ENCODE measurements at regions of chr3 and their contacts with region 1.

Region 1: DNA sequence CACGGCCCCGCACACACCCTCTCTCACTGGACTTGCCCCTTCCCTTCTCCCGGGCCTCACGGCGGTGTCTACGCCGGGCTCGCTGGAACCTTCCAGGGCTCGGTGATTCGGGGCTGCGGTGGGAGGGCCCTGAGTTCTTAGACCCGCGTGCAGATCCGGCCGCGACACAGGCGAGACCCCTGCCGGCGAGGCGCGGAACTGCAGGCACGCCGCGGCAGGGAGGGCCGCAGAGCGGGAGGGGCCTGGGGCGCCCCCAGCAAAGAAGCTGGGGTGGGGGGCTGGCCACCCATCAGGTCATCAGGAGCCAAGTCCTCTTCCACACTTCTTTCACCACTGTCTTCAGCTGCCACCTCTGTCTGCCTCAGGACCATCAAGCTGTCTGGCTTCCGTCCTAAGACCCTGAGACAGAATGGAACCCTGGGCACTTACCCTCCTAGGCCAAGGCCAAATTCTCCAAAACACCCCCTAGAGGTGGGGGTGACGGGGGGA is 164.5 kb downstream of the XXYLT1 start:
- DNase-seq: peak; percentile 25
- H3K4me3 ChIP-seq: peak overlapping the region in 1 of 3 experiments; percentile 45
- H3K27ac ChIP-seq: no peak overlapping the region
- H3K4me1 ChIP-seq: peaks cover 5% of the 10 kb centered on the region
- H3K27me3 ChIP-seq: no peaks in the 10 kb centered on the region
- CTCF ChIP-seq: peak; percentile 80 to 99

Region 2: GRCh38 chr3:194671900-194672808 is 434.3 kb before region 1 on chr3 and contains the start of gene LSG1:
- CTCF ChIA-PET with region 1: no interaction called
- dilution Hi-C with region 1: no loop called
- in situ Hi-C with region 1: no loop called
- intact Hi-C with region 1: loop called (anchors 1 kb)
- DNase-seq: peak; percentile 90
- H3K4me3 ChIP-seq: peak within 1 kb of the TSS; percentile 57 to 96 (median 95)
- H3K27ac ChIP-seq: peak within 1 kb of the TSS; percentile 98
- H3K4me1 ChIP-seq: peaks cover 21% of the 10 kb centered on the region
- H3K27me3 ChIP-seq: no peaks in the 10 kb centered on the region
- CTCF ChIP-seq: no peak
- total RNA-seq, gene LSG1: 33.5 to 33.8 TPM

Region 3: GRCh38 chr3:194769020-194769643 is 337.3 kb before region 1 on chr3:
- CTCF ChIA-PET with region 1: no interaction called
- dilution Hi-C with region 1: no loop called
- in situ Hi-C with region 1: no loop called
- intact Hi-C with region 1: loop called (anchors 10 kb)
- DNase-seq: peak; percentile 93
- H3K4me3 ChIP-seq: peak overlapping the region; percentile 17 to 39 (median 32)
- H3K27ac ChIP-seq: no peak overlapping the region
- H3K4me1 ChIP-seq: peaks cover 19% of the 10 kb centered on the region
- H3K27me3 ChIP-seq: no peaks in the 10 kb centered on the region
- CTCF ChIP-seq: no peak

Region 4: DNA sequence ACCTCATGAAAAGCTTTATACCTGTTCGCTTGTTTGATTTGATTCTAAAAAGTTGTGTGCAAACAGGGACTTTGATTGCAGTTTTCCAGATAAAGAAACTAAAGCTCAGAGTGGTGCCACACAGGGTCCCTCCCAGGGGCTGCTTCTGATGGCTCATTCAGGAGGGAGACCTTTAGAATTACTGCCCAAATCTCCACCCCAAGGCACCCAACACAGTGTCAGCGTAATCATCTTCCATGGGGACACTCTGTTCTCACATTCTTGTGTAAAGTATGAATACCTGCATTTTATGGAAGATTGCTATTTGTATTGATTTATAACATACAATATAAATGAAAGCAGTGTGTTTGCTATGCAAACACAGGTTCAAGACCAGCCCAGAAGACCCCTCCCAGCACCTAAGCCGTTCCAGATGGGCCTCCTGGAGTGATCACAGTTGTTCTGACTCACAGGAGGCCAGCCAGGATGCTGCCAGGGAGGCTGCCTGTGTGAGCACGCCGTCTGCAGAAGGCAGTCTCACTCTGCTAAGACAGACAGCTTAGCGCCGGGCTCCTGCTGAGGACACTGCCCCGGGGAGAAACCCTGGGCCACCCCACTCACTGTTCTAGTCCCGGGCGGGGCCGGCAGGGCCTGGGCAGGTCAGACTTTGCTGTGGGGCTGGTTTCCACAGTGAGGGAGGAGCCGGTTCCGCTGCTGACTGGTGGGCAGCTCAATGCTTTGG is 235.2 kb before region 1 on chr3:
- CTCF ChIA-PET with region 1: no interaction called
- dilution Hi-C with region 1: no loop called
- in situ Hi-C with region 1: no loop called
- intact Hi-C with region 1: loop called (anchors 10 kb)
- DNase-seq: peak; percentile 88
- H3K4me3 ChIP-seq: no peak overlapping the region
- H3K27ac ChIP-seq: peak overlapping the region; percentile 69
- H3K4me1 ChIP-seq: peaks cover 38% of the 10 kb centered on the region
- H3K27me3 ChIP-seq: no peaks in the 10 kb centered on the region
- CTCF ChIP-seq: peak in 1 of 2 donors; percentile 23

Region 5: DNA sequence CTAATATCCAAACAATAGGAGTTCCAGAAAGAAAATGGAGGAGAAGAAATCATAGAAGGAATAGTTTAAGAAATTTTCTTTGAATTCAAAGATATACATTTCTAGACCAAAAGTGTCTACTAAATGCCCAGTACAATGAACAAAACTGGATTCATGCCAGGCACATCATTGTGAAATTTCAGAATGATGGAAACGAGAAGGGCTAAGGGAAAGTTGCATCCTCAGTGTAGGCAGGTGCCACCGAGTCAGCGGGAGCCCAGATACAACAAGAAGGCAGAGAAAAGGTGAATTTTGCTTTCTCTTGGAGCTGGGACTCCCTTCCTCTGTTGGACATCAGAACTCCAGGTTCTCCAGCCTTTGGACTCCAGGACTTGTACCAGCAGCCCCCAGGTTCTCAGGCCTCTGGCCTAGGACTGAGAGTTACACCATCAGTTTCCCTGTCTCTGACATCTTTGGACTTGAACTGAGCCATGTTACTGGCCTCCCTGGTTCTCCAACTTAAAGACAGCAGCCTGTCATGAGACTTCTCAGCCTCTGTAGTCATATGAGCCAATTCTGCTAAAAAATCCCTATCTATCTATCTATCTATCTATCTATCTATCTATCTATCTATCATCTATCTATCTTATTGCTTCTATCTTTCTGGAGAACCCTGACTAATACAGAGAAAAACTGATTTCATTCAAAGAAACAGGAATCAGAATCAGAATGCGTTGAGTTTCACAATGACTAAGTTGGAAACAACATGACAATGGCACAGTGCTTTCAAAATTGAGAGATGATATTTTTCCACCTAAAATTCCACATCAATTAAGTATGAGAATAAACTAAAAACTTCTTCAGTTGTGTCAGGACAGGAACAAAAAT is 213.1 kb before region 1 on chr3:
- CTCF ChIA-PET with region 1: no interaction called
- dilution Hi-C with region 1: no loop called
- in situ Hi-C with region 1: no loop called
- intact Hi-C with region 1: no loop called
- DNase-seq: no peak
- H3K4me3 ChIP-seq: no peak overlapping the region
- H3K27ac ChIP-seq: no peak overlapping the region
- H3K4me1 ChIP-seq: no peaks in the 10 kb centered on the region
- H3K27me3 ChIP-seq: peaks cover 2% of the 10 kb centered on the region
- CTCF ChIP-seq: no peak

Region 6: DNA sequence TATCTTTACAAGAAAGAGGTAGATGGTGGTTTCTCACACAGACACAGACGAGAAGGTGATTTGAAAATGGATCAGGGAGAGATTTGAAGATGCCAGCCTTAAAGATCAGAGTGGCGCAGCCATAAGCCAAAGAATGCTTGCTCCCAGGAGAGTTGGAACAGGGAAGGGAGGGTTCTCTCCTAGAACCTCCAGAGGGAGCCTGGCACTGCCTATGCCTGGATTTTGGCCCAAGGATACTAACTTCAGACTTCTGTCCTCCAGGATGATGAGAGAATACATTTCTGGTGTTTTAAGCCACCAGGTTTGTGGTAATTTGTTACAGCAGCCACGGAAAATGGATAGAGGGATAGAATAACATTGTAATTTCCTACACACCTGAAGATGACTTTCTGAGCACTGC is 141.6 kb before region 1 on chr3:
- CTCF ChIA-PET with region 1: no interaction called
- dilution Hi-C with region 1: no loop called
- in situ Hi-C with region 1: no loop called
- intact Hi-C with region 1: loop called (anchors 1 kb)
- DNase-seq: no peak
- H3K4me3 ChIP-seq: no peak overlapping the region
- H3K27ac ChIP-seq: no peak overlapping the region
- H3K4me1 ChIP-seq: no peaks in the 10 kb centered on the region
- H3K27me3 ChIP-seq: no peaks in the 10 kb centered on the region
- CTCF ChIP-seq: peak; percentile 11 to 45

Region 7: DNA sequence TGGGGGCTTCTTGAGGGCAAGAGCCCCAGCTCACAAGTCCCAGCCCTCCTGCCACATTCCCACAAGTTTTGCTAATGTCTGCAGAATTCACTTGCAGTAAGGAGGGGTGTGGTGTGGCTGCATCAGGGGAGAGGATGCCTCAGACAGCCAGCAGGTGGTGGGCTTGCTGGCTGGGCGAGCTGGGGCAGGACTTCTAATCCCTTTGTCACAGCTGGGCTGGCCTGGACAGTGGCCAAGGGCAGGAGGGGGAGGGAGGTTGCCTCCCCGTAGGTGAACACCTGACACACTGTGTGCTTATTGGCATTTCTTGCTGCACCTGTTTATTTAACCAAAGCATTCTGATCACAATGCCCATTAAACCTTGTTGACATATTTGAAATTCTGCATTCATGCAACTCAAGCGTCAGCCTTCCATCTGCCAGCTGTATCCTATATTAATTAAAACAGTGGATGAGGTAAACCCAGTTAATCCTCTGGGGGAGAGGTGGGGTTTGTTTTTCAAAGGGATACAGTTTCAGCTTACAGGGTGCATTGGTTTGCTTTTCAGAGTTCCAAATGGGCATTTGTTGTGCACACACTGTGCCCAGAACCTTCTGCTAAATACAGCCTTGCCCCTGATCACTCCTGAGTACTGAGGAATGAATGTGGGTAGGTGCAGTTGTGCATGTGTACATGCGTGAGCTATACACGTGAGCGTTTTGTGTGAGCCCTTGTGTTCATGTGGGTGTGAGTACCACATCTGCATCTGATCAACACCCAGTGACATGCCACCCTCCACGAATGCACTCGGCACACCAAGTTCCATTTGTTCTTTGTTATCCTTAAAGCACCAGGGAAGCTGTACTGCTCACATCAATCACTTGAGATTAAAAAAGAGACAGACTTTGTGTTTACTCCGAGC is 104.3 kb before region 1 on chr3:
- CTCF ChIA-PET with region 1: no interaction called
- dilution Hi-C with region 1: no loop called
- in situ Hi-C with region 1: no loop called
- intact Hi-C with region 1: loop called (anchors 1 kb)
- DNase-seq: peak; percentile 52
- H3K4me3 ChIP-seq: no peak overlapping the region
- H3K27ac ChIP-seq: no peak overlapping the region
- H3K4me1 ChIP-seq: no peaks in the 10 kb centered on the region
- H3K27me3 ChIP-seq: no peaks in the 10 kb centered on the region
- CTCF ChIP-seq: peak; percentile 50 to 62

Measured in mammary epithelial cell (primary cell).